ENCODE measurements at regions of chr13 and their contacts with region 1.

Region 1: DNA sequence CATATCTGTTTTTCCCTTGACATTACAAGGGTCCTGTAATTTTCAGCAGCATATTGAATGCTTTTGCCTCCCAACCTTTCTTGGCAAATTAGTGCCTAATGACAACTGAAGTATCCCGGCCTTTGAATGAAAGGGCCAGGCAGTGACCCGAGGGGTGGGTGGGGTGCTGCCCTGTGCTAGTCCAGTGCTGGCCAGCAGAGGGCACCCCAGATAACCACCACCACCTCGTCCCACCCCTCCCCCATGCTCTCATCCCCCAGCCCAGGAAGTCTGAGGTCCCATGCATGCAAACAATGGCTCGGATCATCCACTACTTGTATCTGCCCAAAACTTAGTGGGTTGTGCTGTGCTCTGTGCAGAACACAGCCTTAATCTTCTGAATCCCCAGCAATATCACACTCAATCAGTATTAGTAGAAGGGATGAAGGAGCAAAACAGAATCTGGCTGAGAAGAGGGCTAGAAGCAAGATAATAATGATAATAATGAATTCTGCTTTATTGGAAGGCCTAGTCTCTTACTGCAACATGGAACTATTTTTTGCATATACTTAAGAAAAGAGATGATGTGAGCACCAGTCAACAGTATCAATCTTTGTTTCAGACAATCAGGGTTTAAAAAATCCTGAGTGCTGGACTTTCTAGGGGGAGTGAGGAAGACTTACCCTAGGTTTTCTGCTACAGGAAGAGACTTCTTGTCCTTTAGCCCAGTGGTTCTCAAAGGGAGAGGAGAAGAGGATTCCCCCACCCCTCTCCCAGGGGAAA is 3.8 kb downstream of the ATP12A start:
- DNase-seq: peak; percentile 83
- ATAC-seq: peak; percentile 76
- H3K4me3 Mint-ChIP-seq: no peak overlapping the region
- H3K27ac Mint-ChIP-seq: no peak overlapping the region
- H3K4me1 Mint-ChIP-seq: peaks cover 33% of the 10 kb centered on the region
- H3K27me3 Mint-ChIP-seq: peaks cover 46% of the 10 kb centered on the region

Region 2: DNA sequence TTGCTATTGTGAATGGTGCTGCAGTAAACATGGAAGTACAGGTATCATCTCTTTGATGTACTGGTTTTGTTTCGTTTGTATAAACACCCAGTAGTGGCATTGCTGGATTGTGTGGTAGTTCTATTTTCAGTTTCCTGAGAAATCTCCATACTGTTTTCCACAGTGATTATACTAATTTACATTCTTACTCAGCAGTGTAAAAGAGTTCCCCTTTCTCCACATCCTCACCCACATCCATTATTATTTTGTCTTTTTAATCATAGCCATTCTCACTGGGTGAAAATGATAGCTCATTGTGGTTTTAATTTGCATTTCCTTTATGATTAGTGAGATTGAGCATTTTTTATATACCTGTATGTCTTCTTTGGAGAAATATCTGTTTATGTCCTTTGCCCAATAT is 109.2 kb before region 1 on chr13:
- CTCF ChIA-PET with region 1: interaction called, 5 read pairs
- POLR2A ChIA-PET with region 1: no interaction called
- intact Hi-C with region 1: loop called in 1 of 2 experiments (anchors 5 kb)
- DNase-seq: no peak
- ATAC-seq: peak; percentile 80
- H3K4me3 Mint-ChIP-seq: no peak overlapping the region
- H3K27ac Mint-ChIP-seq: no peak overlapping the region
- H3K4me1 Mint-ChIP-seq: peaks cover 16% of the 10 kb centered on the region
- H3K27me3 Mint-ChIP-seq: peaks cover 5% of the 10 kb centered on the region

Region 3: GRCh38 chr13:24605923-24606372 is 78.1 kb before region 1 on chr13:
- CTCF ChIA-PET with region 1: interaction called, 5 read pairs
- POLR2A ChIA-PET with region 1: no interaction called
- intact Hi-C with region 1: loop called in 1 of 2 experiments (anchors 1 kb)
- DNase-seq: peak; percentile 26
- ATAC-seq: peak; percentile 90
- H3K4me3 Mint-ChIP-seq: no peak overlapping the region
- H3K27ac Mint-ChIP-seq: peak overlapping the region; percentile 65
- H3K4me1 Mint-ChIP-seq: peaks cover 32% of the 10 kb centered on the region
- H3K27me3 Mint-ChIP-seq: peaks cover 15% of the 10 kb centered on the region

Region 4: DNA sequence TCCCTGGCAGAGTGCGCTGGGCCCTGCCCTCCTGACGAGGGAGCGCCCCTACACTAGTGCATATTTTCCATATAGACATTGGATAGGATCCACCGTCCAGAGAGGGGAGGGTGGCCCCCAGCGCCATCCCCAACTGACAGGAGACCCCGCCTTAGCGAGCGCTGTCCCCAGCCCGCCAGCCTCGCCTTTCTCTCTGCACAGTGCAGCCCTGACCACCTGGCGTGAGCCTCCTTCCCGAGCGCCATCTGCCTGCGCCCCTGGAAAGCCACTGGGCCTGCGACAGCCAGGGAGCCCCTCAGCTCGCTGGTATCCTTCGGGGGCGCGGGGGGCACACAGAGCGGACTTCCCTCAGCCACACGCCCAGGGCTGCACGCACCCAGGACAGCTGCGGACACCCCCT is 45.9 kb before region 1 on chr13:
- CTCF ChIA-PET with region 1: no interaction called
- POLR2A ChIA-PET with region 1: no interaction called
- intact Hi-C with region 1: no loop called
- DNase-seq: no peak
- ATAC-seq: no peak
- H3K4me3 Mint-ChIP-seq: no peak overlapping the region
- H3K27ac Mint-ChIP-seq: no peak overlapping the region
- H3K4me1 Mint-ChIP-seq: no peaks in the 10 kb centered on the region
- H3K27me3 Mint-ChIP-seq: no peaks in the 10 kb centered on the region

Region 5: DNA sequence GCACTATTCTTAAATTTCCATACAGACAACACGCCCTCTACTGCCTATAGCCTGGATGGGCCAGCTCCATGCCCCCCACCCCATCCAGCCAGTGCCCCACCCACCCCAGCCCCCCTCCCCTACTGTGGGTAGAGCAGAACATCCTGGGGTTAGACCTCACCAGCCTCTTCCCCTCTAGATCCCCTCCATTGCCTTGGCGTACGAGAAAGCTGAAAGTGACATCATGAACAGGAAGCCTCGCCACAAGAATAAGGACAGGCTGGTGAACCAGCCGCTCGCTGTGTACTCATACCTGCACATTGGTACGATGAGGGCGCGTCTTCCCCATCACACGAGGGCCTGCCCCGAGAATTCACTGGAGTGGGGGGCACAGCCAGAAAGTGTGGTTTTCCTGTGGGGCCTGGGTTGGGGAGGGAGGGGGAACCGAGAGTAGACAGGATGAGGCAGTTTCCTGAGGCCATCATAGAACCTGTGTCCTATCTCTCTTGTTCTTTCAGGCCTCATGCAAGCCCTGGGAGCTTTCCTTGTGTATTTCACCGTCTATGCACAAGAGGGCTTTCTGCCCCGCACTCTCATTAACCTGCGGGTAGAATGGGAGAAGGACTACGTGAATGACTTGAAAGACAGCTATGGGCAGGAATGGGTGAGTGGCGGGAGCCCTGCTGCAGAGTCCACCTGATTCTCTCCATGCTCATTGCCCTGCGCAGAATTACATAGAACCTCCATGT is 25.3 kb after region 1 on chr13:
- CTCF ChIA-PET with region 1: interaction called, 5 read pairs
- POLR2A ChIA-PET with region 1: no interaction called
- intact Hi-C with region 1: loop called in 1 of 2 experiments (anchors 1 kb)
- DNase-seq: peak; percentile 84
- ATAC-seq: peak; percentile 98
- H3K4me3 Mint-ChIP-seq: peak overlapping the region; percentile 10
- H3K27ac Mint-ChIP-seq: peak overlapping the region; percentile 75
- H3K4me1 Mint-ChIP-seq: peaks cover 25% of the 10 kb centered on the region
- H3K27me3 Mint-ChIP-seq: peaks cover 3% of the 10 kb centered on the region

Measured in activated CD4-positive, alpha-beta T cell treated with anti-CD3 and anti-CD28 coated beads for 36 hours (primary cell).